Aorta (tissue), 5 donors: ENCODE measurements at regions of chr5 and their contacts with region 1.

Region 1: GRCh38 chr5:17189381-17190036 is 27.9 kb upstream of the BASP1 start:
- DNase-seq: peak; percentile 80 to 90
- ATAC-seq: peak; percentile 69
- H3K4me3 ChIP-seq: no peak overlapping the region
- H3K27ac ChIP-seq: no peak overlapping the region
- H3K4me1 ChIP-seq: no peaks in the 10 kb centered on the region
- H3K27me3 ChIP-seq: no peaks in the 10 kb centered on the region

Region 2: GRCh38 chr5:16679863-16680262 is 509.6 kb before region 1 on chr5:
- intact Hi-C with region 1: loop called in 1 of 2 experiments (anchors 10 kb)
- DNase-seq: no peak
- ATAC-seq: no peak
- H3K4me3 ChIP-seq: no peak overlapping the region
- H3K27ac ChIP-seq: no peak overlapping the region
- H3K4me1 ChIP-seq: no peaks in the 10 kb centered on the region
- H3K27me3 ChIP-seq: no peaks in the 10 kb centered on the region

Region 3: GRCh38 chr5:16791036-16791705 is 398.3 kb before region 1 on chr5:
- intact Hi-C with region 1: loop called (anchors 2 kb)
- DNase-seq: no peak
- ATAC-seq: peak; percentile 62
- H3K4me3 ChIP-seq: no peak overlapping the region
- H3K27ac ChIP-seq: no peak overlapping the region
- H3K4me1 ChIP-seq: no peaks in the 10 kb centered on the region
- H3K27me3 ChIP-seq: no peaks in the 10 kb centered on the region

Region 4: GRCh38 chr5:17305964-17306716 is 116.6 kb after region 1 on chr5:
- intact Hi-C with region 1: no loop called
- DNase-seq: peak; percentile 77 to 79
- ATAC-seq: peak; percentile 80
- H3K4me3 ChIP-seq: no peak overlapping the region
- H3K27ac ChIP-seq: peak overlapping the region in 1 of 2 donors; percentile 25
- H3K4me1 ChIP-seq: peaks cover 0 to 3% of the 10 kb centered on the region in 2 donors
- H3K27me3 ChIP-seq: no peaks in the 10 kb centered on the region

Region 5: GRCh38 chr5:17455942-17456341 is 266.4 kb after region 1 on chr5:
- intact Hi-C with region 1: no loop called
- DNase-seq: no peak
- ATAC-seq: no peak
- H3K4me3 ChIP-seq: no peak overlapping the region
- H3K27ac ChIP-seq: no peak overlapping the region
- H3K4me1 ChIP-seq: no peaks in the 10 kb centered on the region
- H3K27me3 ChIP-seq: peaks cover 0 to 4% of the 10 kb centered on the region in 2 donors